ENCODE measurements at regions of chr16 and their contacts with region 1.

Region 1: GRCh38 chr16:82263521-82264143 is 93.6 kb upstream of the MPHOSPH6 start:
- DNase-seq: peak; percentile 20
- H3K4me3 ChIP-seq: no peak overlapping the region
- H3K27ac ChIP-seq: no peak overlapping the region
- H3K4me1 ChIP-seq: no peaks in the 10 kb centered on the region
- H3K27me3 ChIP-seq: peaks cover 4% of the 10 kb centered on the region
- CTCF ChIP-seq: peak; percentile 90 to 97

Region 2: GRCh38 chr16:82344157-82344556 is 80.5 kb after region 1 on chr16:
- CTCF ChIA-PET with region 1: interaction called, 5 read pairs
- dilution Hi-C with region 1: no loop called
- in situ Hi-C with region 1: no loop called
- intact Hi-C with region 1: loop called (anchors 1 kb)
- DNase-seq: no peak
- H3K4me3 ChIP-seq: no peak overlapping the region
- H3K27ac ChIP-seq: no peak overlapping the region
- H3K4me1 ChIP-seq: no peaks in the 10 kb centered on the region
- H3K27me3 ChIP-seq: peaks cover 8% of the 10 kb centered on the region
- CTCF ChIP-seq: peak; percentile 50 to 69

Region 3: GRCh38 chr16:82456683-82457082 is 193.1 kb after region 1 on chr16:
- CTCF ChIA-PET with region 1: no interaction called
- dilution Hi-C with region 1: no loop called
- in situ Hi-C with region 1: no loop called
- intact Hi-C with region 1: loop called (anchors 1 kb)
- DNase-seq: peak; percentile 46
- H3K4me3 ChIP-seq: no peak overlapping the region
- H3K27ac ChIP-seq: no peak overlapping the region
- H3K4me1 ChIP-seq: no peaks in the 10 kb centered on the region
- H3K27me3 ChIP-seq: peaks cover 6% of the 10 kb centered on the region
- CTCF ChIP-seq: peak; percentile 80 to 84

Region 4: DNA sequence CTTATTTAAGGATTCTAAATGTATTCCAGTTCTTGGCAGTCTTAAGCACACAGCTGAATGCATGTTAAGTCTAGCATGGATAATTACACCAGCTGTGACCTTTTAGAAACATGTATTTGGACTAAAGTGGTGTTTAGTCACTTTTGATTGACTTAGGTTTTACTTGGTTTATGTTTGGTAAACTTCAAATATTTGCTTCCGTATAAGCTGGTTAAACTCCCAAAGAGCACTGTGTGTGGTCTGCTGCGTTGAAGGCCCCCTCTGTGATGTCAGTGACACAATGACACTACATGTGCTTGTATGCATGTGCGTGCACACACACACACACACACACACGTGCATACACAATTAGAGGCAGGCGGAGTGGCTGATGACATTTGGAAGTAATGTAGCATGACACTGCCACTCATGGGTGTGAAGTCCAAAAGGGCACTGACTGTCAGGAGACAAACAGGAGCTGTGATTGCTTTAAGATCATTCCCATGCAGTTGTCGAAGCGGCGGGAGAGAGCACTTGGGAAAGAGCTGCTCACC is 207.1 kb after region 1 on chr16:
- CTCF ChIA-PET with region 1: no interaction called
- dilution Hi-C with region 1: no loop called
- in situ Hi-C with region 1: no loop called
- intact Hi-C with region 1: no loop called
- DNase-seq: no peak
- H3K4me3 ChIP-seq: no peak overlapping the region
- H3K27ac ChIP-seq: no peak overlapping the region
- H3K4me1 ChIP-seq: no peaks in the 10 kb centered on the region
- H3K27me3 ChIP-seq: no peaks in the 10 kb centered on the region
- CTCF ChIP-seq: no peak

Region 5: GRCh38 chr16:82580298-82580890 is 316.8 kb after region 1 on chr16:
- CTCF ChIA-PET with region 1: no interaction called
- dilution Hi-C with region 1: no loop called
- in situ Hi-C with region 1: loop called (anchors 25 kb)
- intact Hi-C with region 1: loop called (anchors 1 kb)
- DNase-seq: peak; percentile 8
- H3K4me3 ChIP-seq: no peak overlapping the region
- H3K27ac ChIP-seq: no peak overlapping the region
- H3K4me1 ChIP-seq: no peaks in the 10 kb centered on the region
- H3K27me3 ChIP-seq: no peaks in the 10 kb centered on the region
- CTCF ChIP-seq: peak; percentile 51 to 54

Region 6: GRCh38 chr16:82761236-82761635 is 497.6 kb after region 1 on chr16:
- CTCF ChIA-PET with region 1: no interaction called
- dilution Hi-C with region 1: no loop called
- in situ Hi-C with region 1: no loop called
- intact Hi-C with region 1: no loop called
- DNase-seq: peak; percentile 70
- H3K4me3 ChIP-seq: peak overlapping the region in 2 of 3 experiments; percentile 28 to 40
- H3K27ac ChIP-seq: peak overlapping the region; percentile 57
- H3K4me1 ChIP-seq: peaks cover 25% of the 10 kb centered on the region
- H3K27me3 ChIP-seq: no peaks in the 10 kb centered on the region
- CTCF ChIP-seq: no peak

Region 7: DNA sequence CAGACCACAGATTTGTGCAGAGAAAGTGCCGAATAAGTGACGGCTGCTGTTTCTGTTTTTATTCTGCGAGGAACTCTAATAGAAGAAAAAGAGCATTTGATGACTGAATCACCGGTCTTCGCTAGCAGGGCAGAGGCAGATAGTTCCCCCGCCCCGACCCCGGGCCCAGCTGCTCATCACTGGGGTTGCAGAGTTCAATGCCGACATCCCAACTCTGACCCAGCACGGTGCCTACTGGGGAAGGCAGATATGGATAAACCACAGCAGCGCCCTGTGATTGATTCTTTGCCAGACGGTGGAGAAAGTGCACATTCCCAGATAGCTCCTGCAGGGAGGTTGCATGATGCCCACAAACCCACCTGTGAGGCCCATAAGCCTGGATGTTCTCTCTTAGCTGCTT is 1186.2 kb after region 1 on chr16:
- CTCF ChIA-PET with region 1: no interaction called
- dilution Hi-C with region 1: no loop called
- in situ Hi-C with region 1: no loop called
- intact Hi-C with region 1: loop called (anchors 5 kb)
- DNase-seq: no peak
- H3K4me3 ChIP-seq: no peak overlapping the region
- H3K27ac ChIP-seq: no peak overlapping the region
- H3K4me1 ChIP-seq: no peaks in the 10 kb centered on the region
- H3K27me3 ChIP-seq: no peaks in the 10 kb centered on the region
- CTCF ChIP-seq: no peak

Measured in mammary epithelial cell (primary cell).